A549 (cell line): ENCODE measurements at regions of chr10 and their contacts with region 1.

Region 1: DNA sequence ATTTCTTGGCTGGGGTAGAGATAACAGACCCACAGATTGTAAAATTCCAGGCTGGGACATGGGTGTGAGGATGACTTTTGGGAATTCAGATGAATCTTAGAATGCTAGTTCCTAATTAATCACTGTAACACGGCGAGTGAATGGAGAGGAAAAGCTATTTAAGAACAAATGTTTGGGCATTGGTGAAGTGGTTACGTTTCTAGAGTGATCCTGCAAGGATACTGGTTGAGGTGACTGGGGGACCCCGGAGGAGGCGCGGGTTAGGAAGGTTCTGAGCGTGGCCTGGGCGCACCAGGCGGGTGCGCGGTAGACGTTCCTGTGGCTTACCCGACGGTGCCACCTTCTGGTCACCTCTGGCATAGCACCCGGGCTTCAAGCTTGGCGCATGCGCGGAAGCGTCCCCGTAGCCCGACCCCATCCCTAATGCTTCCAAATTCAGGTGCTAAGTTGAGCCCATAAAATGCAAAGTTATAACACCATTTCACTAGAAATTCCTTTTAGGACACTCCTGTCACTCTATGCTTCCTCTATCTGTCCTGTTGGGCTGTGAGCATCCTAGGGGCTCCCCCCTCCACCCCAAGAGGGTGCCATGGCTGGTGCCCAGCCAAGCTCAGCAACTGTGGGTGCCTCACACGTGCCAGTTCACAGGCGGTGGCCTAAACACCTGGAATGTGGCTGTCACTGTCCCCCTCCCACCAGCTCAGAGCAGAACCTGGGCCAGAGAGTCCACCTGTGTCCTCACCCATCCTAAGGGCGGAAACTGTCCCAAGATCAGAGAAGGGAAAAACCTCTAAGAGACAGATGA is 104.5 kb downstream of the PTPRE start:
- DNase-seq: peak; percentile 68 to 88
- ATAC-seq: peak; percentile 79 to 94
- H3K4me3 ChIP-seq: no peak overlapping the region
- H3K27ac ChIP-seq: no peak overlapping the region
- H3K4me1 ChIP-seq: no peaks in the 10 kb centered on the region; the same call in 2 of the 3 replicates
- CTCF ChIP-seq: peak; percentile 89
- EP300 ChIP-seq: no peak
- POLR2A ChIP-seq: no peak
- RAD21 ChIP-seq: peak; percentile 91 to 95

Region 2: GRCh38 chr10:127899766-127900387 is 111.5 kb before region 1 on chr10:
- CTCF ChIA-PET with region 1: interaction called, 229 read pairs
- POLR2A ChIA-PET with region 1: no interaction called
- DNase-seq: no peak
- ATAC-seq: no peak
- H3K4me3 ChIP-seq: no peak overlapping the region
- H3K27ac ChIP-seq: no peak overlapping the region
- H3K4me1 ChIP-seq: no peaks in the 10 kb centered on the region
- CTCF ChIP-seq: no peak
- EP300 ChIP-seq: no peak
- POLR2A ChIP-seq: no peak
- RAD21 ChIP-seq: no peak

Region 3: GRCh38 chr10:127919418-127920271 is 91.7 kb before region 1 on chr10:
- CTCF ChIA-PET with region 1: interaction called, 26 read pairs
- POLR2A ChIA-PET with region 1: no interaction called
- DNase-seq: peak in 1 of 2 experiments; percentile 16
- ATAC-seq: peak in 1 of 2 experiments; percentile 68; a peak in 3 of 6 replicates
- H3K4me3 ChIP-seq: no peak overlapping the region
- H3K27ac ChIP-seq: peak overlapping the region in 1 of 2 experiments; percentile 19; a peak in 1 of 6 replicates
- H3K4me1 ChIP-seq: peaks cover 17% of the 10 kb centered on the region
- CTCF ChIP-seq: no peak
- EP300 ChIP-seq: no peak
- POLR2A ChIP-seq: no peak
- RAD21 ChIP-seq: no peak

Region 4: GRCh38 chr10:127971963-127972615 is 39.3 kb before region 1 on chr10:
- CTCF ChIA-PET with region 1: interaction called, 11 read pairs
- POLR2A ChIA-PET with region 1: no interaction called
- DNase-seq: no peak
- ATAC-seq: no peak
- H3K4me3 ChIP-seq: no peak overlapping the region
- H3K27ac ChIP-seq: no peak overlapping the region
- H3K4me1 ChIP-seq: no peaks in the 10 kb centered on the region
- CTCF ChIP-seq: no peak
- EP300 ChIP-seq: no peak
- POLR2A ChIP-seq: no peak
- RAD21 ChIP-seq: no peak

Region 5: GRCh38 chr10:127990846-127991542 is 20.4 kb before region 1 on chr10:
- CTCF ChIA-PET with region 1: interaction called, 18 read pairs
- POLR2A ChIA-PET with region 1: no interaction called
- DNase-seq: peak; percentile 22 to 35
- ATAC-seq: peak; percentile 64 to 69; a peak in 5 of 6 replicates
- H3K4me3 ChIP-seq: peak overlapping the region; percentile 23; the same call in 2 of the 3 replicates
- H3K27ac ChIP-seq: peak overlapping the region; percentile 23 to 84; a peak in 4 of 6 replicates
- H3K4me1 ChIP-seq: peaks cover 16% of the 10 kb centered on the region
- CTCF ChIP-seq: no peak
- EP300 ChIP-seq: no peak
- POLR2A ChIP-seq: no peak
- RAD21 ChIP-seq: no peak

Region 6: DNA sequence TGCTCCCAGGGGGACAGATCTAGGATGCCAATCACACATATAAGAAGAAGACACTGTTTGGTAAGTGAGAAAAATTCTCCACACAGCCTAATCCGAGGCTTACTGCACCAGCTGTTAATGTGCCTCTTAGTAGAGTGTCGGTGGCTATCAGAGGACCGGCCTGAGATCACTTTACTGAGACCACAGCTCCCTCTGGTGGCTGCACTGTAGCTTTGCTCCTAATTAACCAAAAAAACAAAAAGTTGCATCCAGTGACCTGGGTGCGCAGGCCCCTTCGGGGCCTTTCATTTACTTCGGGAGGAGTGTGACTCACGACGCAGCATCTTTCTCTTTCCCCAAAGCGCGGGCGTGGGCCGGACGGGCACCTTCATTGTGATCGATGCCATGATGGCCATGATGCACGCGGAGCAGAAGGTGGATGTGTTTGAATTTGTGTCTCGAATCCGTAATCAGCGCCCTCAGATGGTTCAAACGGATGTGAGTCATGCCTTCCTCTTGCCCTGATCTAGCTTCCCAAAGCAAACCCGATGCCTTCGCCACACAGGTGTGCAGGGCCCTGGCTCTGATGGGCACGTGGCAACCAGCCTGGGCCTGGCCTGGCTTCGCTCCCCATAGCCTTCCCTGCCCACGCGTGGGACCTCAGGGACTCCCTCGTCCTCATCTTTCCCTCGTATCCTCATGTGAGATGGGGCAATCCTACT is 58.1 kb after region 1 on chr10:
- CTCF ChIA-PET with region 1: interaction called, 22 read pairs
- POLR2A ChIA-PET with region 1: no interaction called
- DNase-seq: peak; percentile 70
- ATAC-seq: peak; percentile 72 to 91
- H3K4me3 ChIP-seq: no peak overlapping the region
- H3K27ac ChIP-seq: no peak overlapping the region
- H3K4me1 ChIP-seq: no peaks in the 10 kb centered on the region
- CTCF ChIP-seq: peak; percentile 89
- EP300 ChIP-seq: no peak
- POLR2A ChIP-seq: no peak
- RAD21 ChIP-seq: peak; percentile 86 to 89

Region 7: GRCh38 chr10:128161031-128161430 is 149.7 kb after region 1 on chr10:
- CTCF ChIA-PET with region 1: no interaction called
- POLR2A ChIA-PET with region 1: no interaction called
- DNase-seq: no peak
- ATAC-seq: no peak
- H3K4me3 ChIP-seq: no peak overlapping the region
- H3K27ac ChIP-seq: no peak overlapping the region
- H3K4me1 ChIP-seq: peaks cover 21% of the 10 kb centered on the region
- CTCF ChIP-seq: no peak
- EP300 ChIP-seq: no peak
- POLR2A ChIP-seq: no peak
- RAD21 ChIP-seq: no peak